IMR-90 (cell line): ENCODE measurements at regions of chr6 and their contacts with region 1.

Region 1: GRCh38 chr6:85421997-85422401 is 27.9 kb upstream of the NT5E start:
- DNase-seq: peak; percentile 77
- ATAC-seq: peak; percentile 59
- H3K4me3 ChIP-seq: no peak overlapping the region
- H3K27ac ChIP-seq: peak overlapping the region; percentile 66
- H3K4me1 ChIP-seq: peaks cover 28% of the 10 kb centered on the region
- H3K27me3 ChIP-seq: no peaks in the 10 kb centered on the region
- CTCF ChIP-seq: no peak
- POLR2A ChIP-seq: no peak
- RAD21 ChIP-seq: no peak

Region 2: GRCh38 chr6:85404502-85405174 is 17.4 kb before region 1 on chr6:
- CTCF ChIA-PET with region 1: no interaction called
- POLR2A ChIA-PET with region 1: no interaction called
- dilution Hi-C with region 1: no loop called
- in situ Hi-C with region 1: no loop called
- intact Hi-C with region 1: loop called (anchors 1 kb)
- DNase-seq: peak; percentile 95
- ATAC-seq: peak; percentile 63
- H3K4me3 ChIP-seq: no peak overlapping the region; the same call in 1 of the 2 replicates
- H3K27ac ChIP-seq: peak overlapping the region; percentile 95
- H3K4me1 ChIP-seq: peaks cover 44% of the 10 kb centered on the region
- H3K27me3 ChIP-seq: no peaks in the 10 kb centered on the region
- CTCF ChIP-seq: no peak
- POLR2A ChIP-seq: peak; percentile 60; the same call in 1 of the 2 replicates
- RAD21 ChIP-seq: no peak; the same call in 1 of the 2 replicates

Region 3: DNA sequence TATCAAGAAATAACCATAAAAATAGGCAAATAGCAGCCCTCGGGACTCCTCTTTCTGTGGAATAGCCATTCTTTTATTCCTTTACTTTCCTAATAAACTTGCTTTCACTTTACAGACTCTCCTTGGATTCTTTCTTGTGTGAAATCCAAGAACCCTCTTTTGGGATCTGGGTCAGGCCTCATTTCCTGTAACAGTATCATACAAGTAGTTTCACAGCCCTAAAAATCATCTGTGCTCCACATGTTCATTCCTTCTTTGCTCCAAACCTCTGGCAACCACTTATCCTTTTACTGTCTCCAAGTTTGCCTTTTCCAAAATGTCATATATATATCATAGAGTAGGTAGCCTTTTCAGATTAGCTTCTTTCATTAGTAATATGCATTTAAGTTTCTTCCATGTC is 14.4 kb after region 1 on chr6:
- CTCF ChIA-PET with region 1: interaction called, 3 read pairs
- POLR2A ChIA-PET with region 1: no interaction called
- dilution Hi-C with region 1: no loop called
- in situ Hi-C with region 1: no loop called
- intact Hi-C with region 1: loop called (anchors 2 kb)
- DNase-seq: peak; percentile 81
- ATAC-seq: no peak
- H3K4me3 ChIP-seq: no peak overlapping the region
- H3K27ac ChIP-seq: no peak overlapping the region
- H3K4me1 ChIP-seq: no peaks in the 10 kb centered on the region
- H3K27me3 ChIP-seq: no peaks in the 10 kb centered on the region
- CTCF ChIP-seq: no peak
- POLR2A ChIP-seq: no peak
- RAD21 ChIP-seq: no peak